Mucosa of descending colon (tissue), 3 donors: ENCODE measurements at regions of chr12 and their contacts with region 1.

Region 1: DNA sequence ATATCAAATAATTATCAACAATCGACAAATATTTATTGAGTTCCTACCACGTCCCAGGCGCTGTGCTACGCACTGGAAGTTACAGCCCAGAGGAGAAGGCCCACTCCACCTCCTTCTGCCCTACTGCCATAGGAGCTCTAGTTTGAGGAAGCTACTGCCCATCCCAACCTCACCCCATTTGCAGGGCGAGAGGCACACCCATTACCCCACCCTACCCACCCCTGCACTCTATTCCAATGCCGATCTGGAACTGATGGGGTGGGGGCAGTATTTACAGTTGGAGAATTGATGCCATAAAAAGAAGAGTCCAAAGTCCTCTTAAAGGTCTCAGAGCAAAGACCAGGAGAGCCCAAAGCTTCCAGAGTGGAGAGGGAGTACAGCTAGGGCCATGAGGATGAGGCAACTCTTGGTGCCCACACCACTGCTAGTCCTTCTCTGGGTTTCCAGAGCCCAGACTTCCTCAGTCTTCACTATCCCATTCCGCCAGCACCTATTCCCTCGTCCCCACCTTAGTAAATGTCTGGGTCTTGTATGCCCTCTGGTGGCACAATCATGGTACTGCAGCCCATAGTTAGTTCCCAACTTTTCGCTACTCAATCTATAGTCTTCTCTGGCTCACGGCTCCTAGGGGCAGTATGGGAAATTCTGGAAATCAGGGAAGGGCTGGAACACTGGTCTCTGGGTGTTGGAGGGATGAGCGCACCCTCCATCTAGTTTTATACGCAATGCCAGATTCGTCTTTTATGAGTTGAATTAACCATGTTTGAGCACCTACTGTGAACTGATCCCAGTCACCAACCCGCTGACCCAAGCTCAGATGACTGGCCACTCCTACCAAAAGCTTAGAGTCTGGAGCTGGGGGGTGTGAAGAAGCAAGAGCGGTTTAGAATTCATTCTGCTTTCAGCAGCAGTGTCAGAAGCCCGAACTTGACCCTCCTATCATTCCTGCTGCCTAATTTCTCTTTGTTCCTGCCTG is 6.9 kb upstream of the ADCY6 start:
- DNase-seq: peak in 2 of 3 donors; percentile 79 to 86
- ATAC-seq: peak; percentile 92
- H3K4me3 ChIP-seq: no peak overlapping the region
- H3K4me1 ChIP-seq: peaks cover 35% of the 10 kb centered on the region
- CTCF ChIP-seq: peak; percentile 91

Region 2: DNA sequence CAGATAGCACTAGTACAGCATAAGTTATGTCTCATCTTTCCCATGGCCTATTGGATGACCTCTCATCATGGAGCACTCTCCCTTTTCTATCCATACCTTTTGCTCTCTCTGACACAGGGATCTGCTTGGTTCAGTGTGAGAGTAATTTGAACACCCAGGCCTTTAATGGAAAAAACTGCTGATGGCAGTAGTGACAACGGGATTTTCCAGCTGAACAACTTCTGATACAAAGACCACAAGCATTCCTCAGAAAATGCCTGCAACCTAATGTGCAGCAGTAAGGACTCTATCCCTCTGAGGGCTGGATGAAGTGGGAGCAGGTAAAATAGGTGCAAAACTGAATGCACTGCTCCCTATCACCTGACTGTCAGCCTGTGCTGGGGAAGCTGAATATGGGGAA is 164.7 kb before region 1 on chr12:
- intact Hi-C with region 1: no loop called
- DNase-seq: no peak
- ATAC-seq: no peak
- H3K4me3 ChIP-seq: no peak overlapping the region
- H3K4me1 ChIP-seq: no peaks in the 10 kb centered on the region
- CTCF ChIP-seq: no peak

Region 3: DNA sequence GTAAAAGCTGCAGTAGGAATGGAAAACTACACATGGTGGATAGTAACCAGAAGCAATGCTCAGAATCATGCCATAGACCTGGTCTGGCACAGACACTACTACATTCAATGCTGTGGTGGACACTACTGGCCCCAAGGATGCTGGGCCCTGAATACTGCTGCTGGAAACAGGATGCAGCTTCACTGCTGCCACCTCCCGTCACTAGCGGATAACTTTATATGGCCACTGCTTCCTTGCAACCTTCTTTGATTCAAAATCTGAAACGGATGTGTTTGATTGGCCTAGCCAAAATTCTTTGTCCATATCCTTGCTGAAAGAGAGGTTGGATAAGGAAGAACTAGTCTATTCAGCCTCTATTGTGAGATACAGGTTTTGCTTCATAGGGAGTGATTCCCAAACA is 37.5 kb before region 1 on chr12:
- intact Hi-C with region 1: loop called (anchors 2 to 5 kb)
- DNase-seq: no peak
- ATAC-seq: peak; percentile 46
- H3K4me3 ChIP-seq: no peak overlapping the region
- H3K4me1 ChIP-seq: no peaks in the 10 kb centered on the region
- CTCF ChIP-seq: no peak

Region 4: GRCh38 chr12:48995061-48995879 is 199.5 kb after region 1 on chr12:
- intact Hi-C with region 1: no loop called
- DNase-seq: peak; percentile 77 to 87 (median 86)
- ATAC-seq: peak; percentile 78
- H3K4me3 ChIP-seq: no peak overlapping the region
- H3K4me1 ChIP-seq: peaks cover 32% of the 10 kb centered on the region
- CTCF ChIP-seq: peak; percentile 83